ENCODE measurements at regions of chr18 and their contacts with region 1.

Region 1: GRCh38 chr18:71784777-71785176 is 759.4 kb downstream of the CBLN2 start:
- DNase-seq: no peak

Region 2: DNA sequence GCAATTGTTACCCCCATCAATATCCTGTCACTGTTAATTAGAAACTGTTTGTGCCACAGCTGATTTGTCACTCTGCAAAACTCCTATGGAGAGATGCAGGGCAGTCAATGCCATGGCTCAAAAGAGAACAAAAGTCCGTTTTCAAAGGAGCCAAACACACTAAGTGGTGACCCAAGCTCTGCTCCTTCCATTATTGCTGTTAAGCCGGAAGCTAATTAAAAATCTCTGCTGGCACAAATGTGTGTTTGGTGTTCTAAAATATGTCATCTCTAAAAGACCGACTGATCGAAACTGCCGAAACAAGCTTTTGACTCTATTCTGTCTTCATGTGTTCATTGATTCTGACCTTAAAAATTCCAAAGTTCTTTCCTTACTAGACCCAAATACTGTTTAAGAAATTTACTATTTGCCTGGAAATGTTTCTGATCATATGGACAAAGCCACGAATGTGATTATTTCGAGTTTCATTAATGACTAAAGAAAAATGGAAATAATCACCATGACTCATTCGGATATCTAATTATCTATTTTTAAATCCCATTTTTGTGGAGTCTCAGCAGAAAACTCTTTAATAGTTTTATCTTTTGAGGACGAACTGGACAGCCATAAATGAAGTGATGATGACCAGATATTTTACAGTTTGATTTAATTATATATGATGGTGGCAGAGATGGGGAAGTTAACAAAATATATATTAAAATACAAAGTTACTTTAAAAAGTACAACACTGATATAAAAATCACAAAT is 1208.3 kb before region 1 on chr18:
- intact Hi-C with region 1: no loop called
- DNase-seq: no peak

Region 3: DNA sequence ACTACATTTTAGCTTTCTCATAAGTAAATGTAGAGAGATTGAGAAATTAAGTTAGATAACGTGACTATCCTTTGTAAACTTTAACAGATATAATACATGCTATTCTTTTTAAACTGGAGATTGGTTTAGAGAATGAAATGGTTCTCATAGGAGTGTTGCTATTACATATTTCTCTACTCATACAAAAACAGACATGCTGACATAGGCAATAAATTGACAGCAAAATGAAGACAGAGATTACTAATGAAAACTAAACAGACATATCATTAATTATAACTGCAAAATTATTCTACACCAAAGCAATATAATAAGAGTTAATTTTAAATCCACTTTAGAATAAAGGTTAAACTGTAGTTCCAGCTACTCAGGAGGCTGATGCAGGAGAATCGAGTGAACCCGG is 531.7 kb after region 1 on chr18:
- intact Hi-C with region 1: no loop called
- DNase-seq: no peak

Region 4: GRCh38 chr18:72572896-72573295 is 788.1 kb after region 1 on chr18:
- intact Hi-C with region 1: loop called in 1 of 2 experiments (anchors 5 kb)
- DNase-seq: no peak

Region 5: GRCh38 chr18:72799106-72799505 is 1014.3 kb after region 1 on chr18:
- intact Hi-C with region 1: no loop called
- DNase-seq: no peak

Measured in posterior vena cava (tissue), 2 donors.